ENCODE measurements at regions of chr2 and their contacts with region 1.

Region 1: GRCh38 chr2:136238286-136239078 is 120.5 kb upstream of the CXCR4 start:
- DNase-seq: peak; percentile 81
- H3K4me3 Mint-ChIP-seq: peak overlapping the region; percentile 43
- H3K27ac Mint-ChIP-seq: peak overlapping the region; percentile 89
- H3K4me1 Mint-ChIP-seq: peaks cover 45% of the 10 kb centered on the region
- H3K27me3 Mint-ChIP-seq: no peaks in the 10 kb centered on the region

Region 2: DNA sequence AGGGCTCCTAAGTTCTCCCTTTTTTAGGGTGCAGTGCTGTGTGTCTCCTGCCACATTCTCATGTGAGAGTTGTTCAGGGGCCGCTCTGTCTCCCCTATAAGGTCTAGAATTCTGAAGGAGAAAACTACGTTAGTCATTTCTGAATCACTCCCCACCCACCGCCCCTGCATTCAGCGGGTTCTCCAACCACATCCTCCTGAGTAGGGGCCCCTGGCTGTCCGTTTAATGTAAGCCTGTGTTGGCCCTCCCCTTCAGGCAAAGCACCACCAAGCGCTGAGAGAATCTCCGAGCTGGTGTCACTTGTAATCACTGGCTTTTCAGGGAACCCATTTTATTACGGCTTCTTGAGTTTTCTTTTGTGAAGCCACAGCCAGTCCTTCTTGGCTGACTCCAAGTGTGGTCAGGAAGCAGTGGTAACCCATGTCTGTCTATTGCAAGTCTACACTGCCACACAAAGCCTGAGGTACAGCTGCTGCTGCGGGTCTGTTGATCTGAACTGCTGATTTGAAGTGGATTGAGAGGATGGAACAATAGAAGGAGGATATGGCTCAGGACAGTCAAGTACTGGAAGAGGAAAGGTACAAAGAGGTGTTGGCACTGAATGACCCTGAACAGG is 418.4 kb before region 1 on chr2:
- intact Hi-C with region 1: loop called (anchors 10 kb)
- DNase-seq: peak; percentile 93
- H3K4me3 Mint-ChIP-seq: peak overlapping the region; percentile 74
- H3K27ac Mint-ChIP-seq: peak overlapping the region; percentile 83
- H3K4me1 Mint-ChIP-seq: peaks cover 44% of the 10 kb centered on the region
- H3K27me3 Mint-ChIP-seq: no peaks in the 10 kb centered on the region

Region 3: GRCh38 chr2:136207030-136207623 is 31.4 kb before region 1 on chr2:
- intact Hi-C with region 1: loop called (anchors 2 kb)
- DNase-seq: peak; percentile 60
- H3K4me3 Mint-ChIP-seq: peak overlapping the region; percentile 8
- H3K27ac Mint-ChIP-seq: peak overlapping the region; percentile 92
- H3K4me1 Mint-ChIP-seq: peaks cover 23% of the 10 kb centered on the region
- H3K27me3 Mint-ChIP-seq: peaks cover 4% of the 10 kb centered on the region

Region 4: DNA sequence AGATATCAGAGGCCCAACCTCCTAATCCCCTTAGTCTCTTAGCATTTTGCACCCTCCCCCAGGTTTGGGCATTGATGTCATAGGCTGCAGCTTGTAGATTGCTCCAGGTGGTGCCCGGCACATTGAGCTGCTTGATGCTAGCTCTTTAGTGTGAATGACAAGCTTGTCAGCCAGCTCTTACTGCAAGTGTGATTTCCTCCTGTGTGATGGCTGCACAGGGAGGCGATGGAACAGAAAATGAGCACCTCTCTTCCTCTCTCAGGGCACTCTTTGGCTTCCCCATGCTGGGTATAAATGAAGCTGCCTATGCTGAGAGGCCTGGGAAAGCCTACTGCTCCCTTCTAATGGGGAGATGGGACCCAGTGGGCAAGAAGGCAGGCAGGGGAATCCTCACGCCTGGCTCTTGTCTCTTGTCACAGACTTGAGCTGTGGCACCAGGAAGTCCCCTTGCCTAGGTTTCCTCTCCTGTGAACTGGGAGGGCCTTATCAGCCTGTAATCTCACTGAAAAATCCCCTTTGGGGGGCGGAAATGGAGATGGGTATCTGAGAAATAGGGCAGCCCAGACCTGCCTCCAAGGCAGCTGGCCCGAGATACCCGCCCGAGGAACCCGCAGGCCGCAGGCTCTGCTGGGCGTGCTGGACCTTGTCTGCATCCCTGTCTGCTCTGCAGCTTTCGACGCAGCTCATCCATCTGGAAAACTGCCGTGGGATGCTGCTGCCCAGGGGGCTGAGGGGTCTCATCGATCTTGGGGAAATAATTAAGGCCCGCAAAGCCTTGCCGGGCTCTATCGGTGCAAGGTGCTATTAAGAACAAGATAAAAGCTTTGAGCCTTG is 43.0 kb after region 1 on chr2:
- intact Hi-C with region 1: loop called (anchors 5 kb)
- DNase-seq: peak; percentile 83
- H3K4me3 Mint-ChIP-seq: peak overlapping the region; percentile 1
- H3K27ac Mint-ChIP-seq: peak overlapping the region; percentile 79
- H3K4me1 Mint-ChIP-seq: peaks cover 43% of the 10 kb centered on the region
- H3K27me3 Mint-ChIP-seq: no peaks in the 10 kb centered on the region

Region 5: DNA sequence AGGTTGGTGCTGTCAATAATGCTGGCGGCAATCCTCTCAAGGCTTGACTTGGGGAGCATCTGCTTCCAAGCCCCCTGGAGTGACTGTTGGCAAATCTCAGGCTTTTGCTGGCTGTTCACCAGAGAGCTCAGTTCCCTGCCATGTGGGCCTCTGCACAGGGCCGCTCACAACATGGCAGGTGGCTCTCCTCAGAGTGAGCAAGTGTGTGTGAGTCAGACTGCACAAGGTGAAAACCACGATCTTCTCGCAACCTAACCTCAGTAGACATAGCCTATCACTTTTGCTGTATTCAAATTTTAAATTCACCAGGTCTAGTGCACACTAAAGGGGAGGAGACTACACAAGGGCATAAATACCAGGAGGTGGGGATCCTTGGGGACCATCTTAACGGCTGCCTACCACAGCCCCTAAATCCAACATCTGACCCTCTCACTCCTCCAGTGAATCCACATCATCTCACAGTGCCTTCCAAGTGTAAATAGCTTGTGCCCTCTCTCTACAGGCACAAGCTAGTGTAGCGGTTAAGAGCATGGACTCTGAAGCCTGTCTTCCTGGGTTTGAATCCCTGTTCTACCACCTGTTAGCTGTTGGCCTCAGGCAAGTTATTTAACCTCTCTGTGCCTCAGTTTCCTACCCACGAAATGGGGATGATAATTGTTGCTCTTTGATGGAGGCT is 67.2 kb after region 1 on chr2:
- intact Hi-C with region 1: loop called (anchors 2 kb)
- DNase-seq: peak; percentile 78
- H3K4me3 Mint-ChIP-seq: no peak overlapping the region
- H3K27ac Mint-ChIP-seq: peak overlapping the region; percentile 82
- H3K4me1 Mint-ChIP-seq: peaks cover 22% of the 10 kb centered on the region
- H3K27me3 Mint-ChIP-seq: no peaks in the 10 kb centered on the region

Region 6: DNA sequence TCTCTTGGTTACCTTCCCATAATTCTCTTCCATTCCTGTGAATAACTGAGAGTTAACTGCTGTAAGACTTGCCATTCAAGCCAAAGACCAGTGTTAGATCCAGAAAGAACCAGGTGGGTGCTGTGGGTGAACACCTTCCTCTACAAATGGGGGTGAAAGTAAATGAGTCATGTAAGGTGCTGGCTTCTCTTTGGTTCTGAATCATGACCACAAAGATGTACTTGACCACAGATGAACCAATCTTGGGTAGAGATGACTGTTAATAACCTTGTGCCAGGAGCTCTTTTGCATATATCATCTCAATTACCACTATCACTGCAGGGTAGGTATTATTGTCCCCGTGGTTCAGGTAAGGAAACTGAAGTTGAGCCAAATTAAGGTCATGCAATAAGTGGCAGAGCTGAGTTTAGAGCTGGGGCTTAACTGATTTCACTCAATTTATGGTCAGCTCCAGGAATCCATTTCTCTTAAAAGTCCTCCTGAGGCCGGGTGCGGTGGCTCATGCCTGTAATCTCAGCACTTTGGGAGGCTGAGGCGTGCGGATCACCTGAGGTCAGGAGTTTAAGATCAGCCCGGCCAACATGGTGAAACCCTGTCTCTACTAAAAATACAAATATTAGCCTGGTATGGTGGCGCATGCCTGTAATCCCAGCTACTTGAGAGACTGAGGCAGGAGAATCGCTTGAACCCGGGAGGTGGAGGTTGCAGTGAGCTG is 124.4 kb after region 1 on chr2:
- intact Hi-C with region 1: loop called (anchors 2 kb)
- DNase-seq: peak; percentile 75
- H3K4me3 Mint-ChIP-seq: peak overlapping the region; percentile 34
- H3K27ac Mint-ChIP-seq: peak overlapping the region; percentile 57
- H3K4me1 Mint-ChIP-seq: peaks cover 40% of the 10 kb centered on the region
- H3K27me3 Mint-ChIP-seq: no peaks in the 10 kb centered on the region

Region 7: DNA sequence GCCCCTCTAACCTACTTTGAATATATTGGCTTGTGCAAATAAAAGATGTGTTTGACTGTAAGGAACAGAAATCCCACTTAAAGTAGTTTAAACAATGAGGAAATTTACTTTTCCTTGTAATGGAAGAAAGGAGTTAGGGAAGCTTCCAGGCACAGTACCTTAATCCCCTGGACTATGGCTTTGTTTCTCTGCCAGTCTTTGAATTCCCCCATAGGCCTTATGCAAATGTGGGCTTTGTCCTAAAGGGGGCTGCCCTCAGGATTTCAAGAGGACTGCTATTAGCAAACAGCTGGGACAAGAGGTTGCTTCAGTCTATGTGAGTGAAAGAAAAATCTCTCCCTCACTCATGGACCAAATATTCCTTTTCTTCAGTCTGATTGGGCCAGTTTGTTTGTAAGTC is 271.8 kb after region 1 on chr2:
- intact Hi-C with region 1: no loop called
- DNase-seq: no peak
- H3K4me3 Mint-ChIP-seq: no peak overlapping the region
- H3K27ac Mint-ChIP-seq: no peak overlapping the region
- H3K4me1 Mint-ChIP-seq: no peaks in the 10 kb centered on the region
- H3K27me3 Mint-ChIP-seq: peaks cover 2% of the 10 kb centered on the region

Measured in activated CD4-positive, alpha-beta T cell treated with anti-CD3 and anti-CD28 coated beads, Interleukin-2, amount 10 ng/mL, durations not matched to agents 24 days and 14 days (primary cell).